HEK293T (cell line): ENCODE measurements at regions of chr1 and their contacts with region 1.

Region 1: DNA sequence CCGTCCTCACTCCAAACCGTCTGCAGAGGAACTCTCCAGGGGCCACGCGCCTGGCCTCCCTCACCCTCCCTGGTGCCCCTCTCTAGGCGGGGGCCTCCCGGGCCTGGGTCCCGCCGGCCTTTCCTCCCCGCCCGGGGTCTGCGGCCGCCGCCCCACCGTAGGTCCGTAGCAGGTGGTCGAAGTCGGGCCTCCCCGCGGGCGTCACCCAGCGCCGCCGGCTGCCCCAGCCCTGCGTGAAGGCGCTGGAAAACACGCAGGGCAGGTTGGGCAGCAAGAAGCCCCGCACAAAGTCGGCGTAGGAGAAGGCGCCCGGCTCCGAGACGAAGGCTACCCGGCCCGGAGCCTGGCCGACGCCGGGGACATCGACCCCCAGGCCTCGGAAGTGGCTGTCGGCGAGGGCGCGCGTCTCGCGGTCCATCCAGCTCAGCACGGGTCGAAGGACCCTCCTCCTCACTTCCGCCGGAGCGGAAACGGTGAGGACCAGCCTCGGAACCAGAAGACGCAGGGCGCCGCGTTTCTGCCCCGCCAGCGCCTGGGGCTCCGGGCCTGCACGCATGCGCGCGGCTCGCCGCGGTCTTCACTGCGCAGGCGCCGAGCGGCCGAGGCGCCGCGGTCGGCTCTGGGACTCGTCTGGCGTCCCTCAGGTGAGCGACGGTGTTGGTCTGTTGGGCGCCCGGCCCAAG is at the starts of genes JMJD4 and SNAP47:
- DNase-seq: peak; percentile 98

Region 2: GRCh38 chr1:227787513-227788270 is 52.7 kb after region 1 on chr1:
- CTCF ChIA-PET with region 1: no interaction called
- POLR2A ChIA-PET with region 1: interaction called, 10 read pairs
- DNase-seq: peak; percentile 99

Region 3: GRCh38 chr1:227934476-227935313 is 199.7 kb after region 1 on chr1:
- CTCF ChIA-PET with region 1: no interaction called
- POLR2A ChIA-PET with region 1: no interaction called
- DNase-seq: no peak